ENCODE measurements at regions of chr1 and their contacts with region 1.

Region 1: DNA sequence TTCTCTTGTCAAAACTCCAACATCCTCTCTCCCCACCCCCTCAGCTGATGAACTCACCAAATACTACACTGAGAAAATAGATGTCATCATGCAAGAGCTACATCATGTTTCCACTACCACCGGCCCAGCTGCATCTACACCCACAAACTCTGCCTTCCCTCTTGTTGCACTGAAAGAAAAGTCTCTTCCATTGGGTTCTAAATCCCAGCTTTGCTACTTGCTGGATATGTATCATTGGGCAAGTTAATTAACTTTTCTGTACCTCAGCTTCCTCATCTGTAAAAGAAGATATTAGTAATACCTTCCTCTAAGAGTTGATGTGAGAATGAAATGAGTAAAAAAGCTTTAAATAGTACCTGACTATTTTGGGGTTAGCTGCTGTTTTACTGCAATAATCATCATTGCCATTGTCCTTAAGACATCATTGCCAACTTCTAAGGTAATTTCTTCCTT is 108.6 kb downstream of the OLFML2B start:
- DNase-seq: peak; percentile 78
- ATAC-seq: peak; percentile 89
- H3K4me3 Mint-ChIP-seq: no peak overlapping the region
- H3K27ac Mint-ChIP-seq: no peak overlapping the region
- H3K4me1 Mint-ChIP-seq: peaks cover 24% of the 10 kb centered on the region
- H3K27me3 Mint-ChIP-seq: no peaks in the 10 kb centered on the region
- CTCF ChIP-seq: no peak

Region 2: DNA sequence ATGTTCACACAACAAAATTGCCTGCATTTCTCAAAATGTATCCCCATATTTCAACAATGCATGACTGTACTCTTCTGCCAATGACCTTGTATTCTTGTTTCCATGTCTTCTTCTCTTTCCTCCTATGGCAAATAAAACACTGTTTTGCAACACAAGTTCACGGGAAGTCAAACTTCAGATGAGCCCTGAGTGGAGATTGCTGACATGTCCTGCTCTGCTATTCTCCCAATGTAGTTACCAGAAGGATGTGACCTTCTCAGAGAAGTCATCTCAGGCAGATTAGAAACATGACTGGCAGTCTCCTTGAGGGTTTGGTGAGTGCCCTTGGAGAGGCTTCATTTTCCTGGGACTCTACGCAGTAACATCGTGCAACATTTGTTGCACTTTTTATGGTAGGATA is 236.6 kb before region 1 on chr1:
- CTCF ChIA-PET with region 1: no interaction called
- POLR2A ChIA-PET with region 1: no interaction called
- intact Hi-C with region 1: no loop called
- DNase-seq: no peak
- ATAC-seq: no peak
- H3K4me3 Mint-ChIP-seq: no peak overlapping the region
- H3K27ac Mint-ChIP-seq: no peak overlapping the region
- H3K4me1 Mint-ChIP-seq: peaks cover 6% of the 10 kb centered on the region
- H3K27me3 Mint-ChIP-seq: peaks cover 13% of the 10 kb centered on the region
- CTCF ChIP-seq: no peak

Region 3: GRCh38 chr1:161885003-161885402 is 30.1 kb before region 1 on chr1:
- CTCF ChIA-PET with region 1: no interaction called
- POLR2A ChIA-PET with region 1: no interaction called
- intact Hi-C with region 1: no loop called
- DNase-seq: no peak
- ATAC-seq: no peak
- H3K4me3 Mint-ChIP-seq: no peak overlapping the region
- H3K27ac Mint-ChIP-seq: no peak overlapping the region
- H3K4me1 Mint-ChIP-seq: no peaks in the 10 kb centered on the region
- H3K27me3 Mint-ChIP-seq: no peaks in the 10 kb centered on the region
- CTCF ChIP-seq: no peak

Region 4: GRCh38 chr1:161928056-161928455 is 13.0 kb after region 1 on chr1:
- CTCF ChIA-PET with region 1: interaction called, 10 read pairs
- POLR2A ChIA-PET with region 1: interaction called, 4 read pairs
- intact Hi-C with region 1: no loop called
- DNase-seq: no peak
- ATAC-seq: no peak
- H3K4me3 Mint-ChIP-seq: no peak overlapping the region
- H3K27ac Mint-ChIP-seq: no peak overlapping the region
- H3K4me1 Mint-ChIP-seq: peaks cover 15% of the 10 kb centered on the region
- H3K27me3 Mint-ChIP-seq: no peaks in the 10 kb centered on the region
- CTCF ChIP-seq: no peak